Mammary epithelial cell (primary cell): ENCODE measurements at regions of chr4 and their contacts with region 1.

Region 1: GRCh38 chr4:138035781-138036258 is 206.3 kb downstream of the SLC7A11 start:
- DNase-seq: peak; percentile 54
- H3K4me3 ChIP-seq: no peak overlapping the region
- H3K27ac ChIP-seq: peak overlapping the region; percentile 76
- H3K4me1 ChIP-seq: peaks cover 21% of the 10 kb centered on the region
- H3K27me3 ChIP-seq: no peaks in the 10 kb centered on the region
- CTCF ChIP-seq: peak; percentile 48 to 68

Region 2: DNA sequence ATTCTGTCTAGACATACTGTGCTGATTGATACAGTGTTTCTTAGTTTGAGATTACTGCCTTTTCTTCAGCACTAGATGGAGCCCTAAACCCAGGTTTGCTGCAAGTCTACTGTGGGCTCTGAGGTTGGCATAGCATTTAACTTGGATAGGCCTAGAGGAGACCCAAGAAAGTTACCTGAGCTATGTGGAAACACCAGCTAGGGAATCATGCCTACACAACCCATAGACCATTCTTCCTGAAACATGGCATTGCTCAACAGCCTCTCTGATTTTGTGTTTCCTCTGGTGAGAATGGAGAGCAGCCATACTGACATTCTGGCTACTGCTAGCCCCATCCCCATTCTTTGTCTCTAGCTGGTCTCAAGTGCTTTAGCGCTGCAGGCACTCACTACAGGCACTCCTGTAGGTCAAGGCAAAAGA is 215.8 kb before region 1 on chr4:
- CTCF ChIA-PET with region 1: interaction called, 3 read pairs
- dilution Hi-C with region 1: no loop called
- in situ Hi-C with region 1: no loop called
- intact Hi-C with region 1: loop called (anchors 1 kb)
- DNase-seq: peak; percentile 57
- H3K4me3 ChIP-seq: no peak overlapping the region
- H3K27ac ChIP-seq: no peak overlapping the region
- H3K4me1 ChIP-seq: peaks cover 3% of the 10 kb centered on the region
- H3K27me3 ChIP-seq: no peaks in the 10 kb centered on the region
- CTCF ChIP-seq: peak; percentile 78 to 83

Region 3: GRCh38 chr4:137909529-137910309 is 126.1 kb before region 1 on chr4:
- CTCF ChIA-PET with region 1: no interaction called
- dilution Hi-C with region 1: no loop called
- in situ Hi-C with region 1: no loop called
- intact Hi-C with region 1: no loop called
- DNase-seq: no peak
- H3K4me3 ChIP-seq: no peak overlapping the region
- H3K27ac ChIP-seq: no peak overlapping the region
- H3K4me1 ChIP-seq: no peaks in the 10 kb centered on the region
- H3K27me3 ChIP-seq: no peaks in the 10 kb centered on the region
- CTCF ChIP-seq: no peak

Region 4: DNA sequence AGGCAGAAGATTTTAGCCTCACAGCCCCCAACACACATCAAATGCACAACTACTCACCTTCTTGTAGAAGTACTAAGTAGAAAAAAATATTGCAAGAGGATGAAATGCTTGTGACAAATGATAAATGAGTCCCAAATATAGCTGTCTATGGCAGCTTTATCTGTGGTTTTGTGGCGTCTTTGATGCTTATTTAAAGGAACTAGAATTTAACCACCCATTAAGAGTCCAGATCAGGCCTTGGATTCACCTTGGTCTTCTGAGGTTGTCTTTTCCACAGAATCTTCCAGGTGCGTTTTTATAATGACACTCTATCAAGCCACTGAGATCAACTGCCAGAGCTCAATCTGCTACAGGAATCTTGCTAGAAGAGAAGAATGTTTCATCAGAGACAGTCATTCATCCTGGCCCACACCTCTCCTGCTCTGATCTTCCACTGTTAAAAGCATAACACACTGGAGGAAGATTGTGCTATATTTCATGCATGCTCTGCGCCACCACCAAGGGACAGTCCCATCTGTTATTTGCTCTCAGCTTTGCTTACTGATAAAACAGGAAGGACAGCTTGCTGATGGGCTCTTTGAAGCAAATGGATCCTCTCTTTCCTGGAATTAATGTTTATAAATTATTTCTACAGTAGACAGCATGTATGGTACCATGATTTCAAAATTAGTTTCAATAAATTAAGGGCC is 62.2 kb after region 1 on chr4:
- CTCF ChIA-PET with region 1: no interaction called
- dilution Hi-C with region 1: no loop called
- in situ Hi-C with region 1: loop called (anchors 5 kb)
- intact Hi-C with region 1: no loop called
- DNase-seq: no peak
- H3K4me3 ChIP-seq: no peak overlapping the region
- H3K27ac ChIP-seq: no peak overlapping the region
- H3K4me1 ChIP-seq: no peaks in the 10 kb centered on the region
- H3K27me3 ChIP-seq: no peaks in the 10 kb centered on the region
- CTCF ChIP-seq: no peak

Region 5: DNA sequence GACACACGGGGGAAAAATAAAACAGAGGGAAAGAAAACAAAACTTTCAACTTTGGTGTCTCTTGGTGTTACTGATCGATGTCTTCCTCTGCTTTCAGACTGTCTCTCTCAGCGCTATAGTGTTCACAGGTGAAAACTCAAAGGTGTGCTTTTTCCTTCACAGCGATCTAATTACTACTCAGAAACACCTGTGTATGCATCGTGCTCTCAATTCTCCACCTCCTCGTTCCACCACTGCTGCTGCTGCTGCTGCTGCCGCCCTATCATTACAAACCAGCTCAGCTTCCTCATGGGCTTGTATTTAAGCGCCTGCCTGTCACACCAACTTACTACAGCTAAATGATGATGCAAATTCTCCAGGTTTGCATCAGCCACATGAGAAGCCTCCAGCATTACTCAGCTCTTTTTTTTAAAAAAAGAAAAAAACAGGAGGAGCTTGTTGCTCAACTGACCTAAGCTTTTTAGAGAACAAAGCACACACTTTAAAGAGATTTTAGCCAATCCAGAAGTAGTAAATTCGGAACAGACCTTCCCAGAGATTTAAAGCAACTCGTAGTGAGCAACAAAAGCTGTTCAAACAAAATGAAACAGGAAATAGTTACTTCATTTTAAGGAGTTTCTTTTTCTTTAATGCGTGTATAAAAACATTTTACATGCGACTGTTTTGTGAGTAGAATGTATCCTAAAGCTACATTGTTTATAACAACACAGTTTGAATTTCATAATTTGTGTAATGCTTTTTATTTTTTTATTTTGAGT is 206.4 kb after region 1 on chr4 and contains the start of gene SLC7A11:
- CTCF ChIA-PET with region 1: no interaction called
- dilution Hi-C with region 1: no loop called
- in situ Hi-C with region 1: no loop called
- intact Hi-C with region 1: loop called (anchors 10 kb)
- DNase-seq: peak; percentile 98
- H3K4me3 ChIP-seq: peak within 1 kb of the TSS; percentile 71 to 94 (median 86)
- H3K27ac ChIP-seq: peak within 1 kb of the TSS; percentile 100
- H3K4me1 ChIP-seq: peaks cover 11% of the 10 kb centered on the region
- H3K27me3 ChIP-seq: no peaks in the 10 kb centered on the region
- CTCF ChIP-seq: peak in 1 of 2 donors; percentile 18
- total RNA-seq, gene SLC7A11: 80.2 to 248 TPM

Region 6: GRCh38 chr4:138576684-138577083 is 540.9 kb after region 1 on chr4:
- CTCF ChIA-PET with region 1: no interaction called
- dilution Hi-C with region 1: no loop called
- in situ Hi-C with region 1: no loop called
- intact Hi-C with region 1: loop called (anchors 1 kb)
- DNase-seq: peak; percentile 27
- H3K4me3 ChIP-seq: no peak overlapping the region
- H3K27ac ChIP-seq: no peak overlapping the region
- H3K4me1 ChIP-seq: no peaks in the 10 kb centered on the region
- H3K27me3 ChIP-seq: no peaks in the 10 kb centered on the region
- CTCF ChIP-seq: peak; percentile 62 to 68

Region 7: DNA sequence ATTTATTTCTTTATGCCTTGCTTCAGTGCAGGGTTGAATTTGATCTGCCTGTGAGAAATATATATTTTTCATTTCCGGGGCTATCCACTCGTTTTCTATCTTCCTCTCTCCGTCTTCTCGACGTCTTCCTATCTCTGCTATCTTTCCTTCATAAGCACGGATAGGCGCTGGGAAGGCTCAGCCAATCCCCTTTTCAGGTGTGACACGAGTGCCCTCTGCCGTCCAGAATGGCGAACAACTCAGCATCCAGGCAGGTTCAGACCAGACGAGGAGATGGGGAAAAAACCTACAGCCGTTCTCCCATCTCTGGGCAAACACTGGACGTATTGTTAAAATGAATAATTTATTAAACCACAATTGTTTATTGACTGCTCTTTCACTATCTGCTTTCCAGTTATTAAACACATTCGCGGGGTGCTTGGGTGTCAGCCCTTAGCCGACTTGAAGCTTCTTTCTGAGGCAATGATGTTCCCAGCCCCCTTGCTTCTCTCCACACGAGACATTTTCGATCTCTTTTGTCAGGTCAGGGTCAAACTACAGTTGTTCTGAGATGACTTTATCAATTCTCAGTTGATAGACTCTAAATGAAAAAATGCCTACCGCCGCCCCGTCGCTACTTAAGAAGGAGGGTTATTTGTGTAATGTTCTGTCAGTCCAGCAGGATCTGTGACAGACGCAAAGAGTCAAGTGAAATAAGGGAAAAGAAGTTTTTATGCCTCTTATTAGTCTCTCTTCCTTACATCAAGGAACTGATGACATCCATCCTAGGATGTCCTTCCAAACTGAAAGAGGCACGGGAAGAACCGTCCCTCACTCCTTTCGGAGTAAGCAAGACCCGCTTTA is 883.5 kb after region 1 on chr4:
- CTCF ChIA-PET with region 1: no interaction called
- dilution Hi-C with region 1: no loop called
- in situ Hi-C with region 1: no loop called
- intact Hi-C with region 1: loop called (anchors 5 kb)
- DNase-seq: peak; percentile 74
- H3K4me3 ChIP-seq: no peak overlapping the region
- H3K27ac ChIP-seq: no peak overlapping the region
- H3K4me1 ChIP-seq: no peaks in the 10 kb centered on the region
- H3K27me3 ChIP-seq: no peaks in the 10 kb centered on the region
- CTCF ChIP-seq: peak; percentile 87 to 92